Uterus (tissue), 4 donors: ENCODE measurements at regions of chr16 and their contacts with region 1.

Region 1: GRCh38 chr16:65671-66137 is 6.7 kb downstream of the RHBDF1 start:
- DNase-seq: peak; percentile 75 to 78
- H3K4me3 ChIP-seq: no peak overlapping the region
- H3K27ac ChIP-seq: no peak overlapping the region
- H3K4me1 ChIP-seq: peaks cover 0 to 20% of the 10 kb centered on the region in 2 donors
- H3K27me3 ChIP-seq: no peaks in the 10 kb centered on the region
- CTCF ChIP-seq: peak; percentile 90 to 99 (median 98)
- POLR2A ChIP-seq: no peak

Region 2: DNA sequence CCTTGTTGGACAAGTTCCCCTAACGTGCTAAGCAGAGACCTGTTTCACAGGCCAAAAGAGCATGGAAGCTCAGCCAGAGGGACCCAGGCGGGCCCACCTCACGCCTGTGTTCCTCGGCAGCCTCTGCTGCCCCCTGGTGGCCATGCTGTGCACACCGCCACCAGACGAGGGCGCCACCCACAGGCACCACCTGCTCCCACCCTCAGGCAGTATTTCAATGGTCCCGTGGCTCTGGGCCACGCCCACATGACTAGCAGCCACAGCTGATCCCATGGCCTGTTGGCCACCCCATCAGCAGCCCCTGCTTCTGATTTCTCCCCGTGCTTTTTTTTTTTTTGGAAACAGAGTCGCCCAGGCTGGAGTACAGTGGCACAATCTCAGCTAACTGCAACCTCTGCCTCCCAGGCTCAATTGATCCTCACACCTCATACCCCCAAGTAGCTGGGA is 31.3 kb after region 1 on chr16:
- intact Hi-C with region 1: loop called (anchors 2 kb)
- DNase-seq: peak; percentile 85 to 89
- H3K4me3 ChIP-seq: no peak overlapping the region
- H3K27ac ChIP-seq: peak overlapping the region in 1 of 2 donors; percentile 27
- H3K4me1 ChIP-seq: peaks cover 0 to 11% of the 10 kb centered on the region in 2 donors
- H3K27me3 ChIP-seq: no peaks in the 10 kb centered on the region
- CTCF ChIP-seq: peak; percentile 97 to 100 (median 100)
- POLR2A ChIP-seq: no peak

Region 3: GRCh38 chr16:138049-138417 is 72.3 kb after region 1 on chr16:
- intact Hi-C with region 1: no loop called
- DNase-seq: peak; percentile 23 to 29
- H3K4me3 ChIP-seq: peak overlapping the region; percentile 79 to 92
- H3K27ac ChIP-seq: peak overlapping the region; percentile 60 to 90
- H3K4me1 ChIP-seq: no peaks in the 10 kb centered on the region
- H3K27me3 ChIP-seq: no peaks in the 10 kb centered on the region
- CTCF ChIP-seq: no peak
- POLR2A ChIP-seq: no peak

Region 4: GRCh38 chr16:483341-484075 is 417.8 kb after region 1 on chr16:
- intact Hi-C with region 1: no loop called
- DNase-seq: no peak
- H3K4me3 ChIP-seq: no peak overlapping the region
- H3K27ac ChIP-seq: no peak overlapping the region
- H3K4me1 ChIP-seq: no peaks in the 10 kb centered on the region
- H3K27me3 ChIP-seq: no peaks in the 10 kb centered on the region
- CTCF ChIP-seq: no peak
- POLR2A ChIP-seq: no peak